ENCODE measurements at regions of chr10 and their contacts with region 1.

Region 1: DNA sequence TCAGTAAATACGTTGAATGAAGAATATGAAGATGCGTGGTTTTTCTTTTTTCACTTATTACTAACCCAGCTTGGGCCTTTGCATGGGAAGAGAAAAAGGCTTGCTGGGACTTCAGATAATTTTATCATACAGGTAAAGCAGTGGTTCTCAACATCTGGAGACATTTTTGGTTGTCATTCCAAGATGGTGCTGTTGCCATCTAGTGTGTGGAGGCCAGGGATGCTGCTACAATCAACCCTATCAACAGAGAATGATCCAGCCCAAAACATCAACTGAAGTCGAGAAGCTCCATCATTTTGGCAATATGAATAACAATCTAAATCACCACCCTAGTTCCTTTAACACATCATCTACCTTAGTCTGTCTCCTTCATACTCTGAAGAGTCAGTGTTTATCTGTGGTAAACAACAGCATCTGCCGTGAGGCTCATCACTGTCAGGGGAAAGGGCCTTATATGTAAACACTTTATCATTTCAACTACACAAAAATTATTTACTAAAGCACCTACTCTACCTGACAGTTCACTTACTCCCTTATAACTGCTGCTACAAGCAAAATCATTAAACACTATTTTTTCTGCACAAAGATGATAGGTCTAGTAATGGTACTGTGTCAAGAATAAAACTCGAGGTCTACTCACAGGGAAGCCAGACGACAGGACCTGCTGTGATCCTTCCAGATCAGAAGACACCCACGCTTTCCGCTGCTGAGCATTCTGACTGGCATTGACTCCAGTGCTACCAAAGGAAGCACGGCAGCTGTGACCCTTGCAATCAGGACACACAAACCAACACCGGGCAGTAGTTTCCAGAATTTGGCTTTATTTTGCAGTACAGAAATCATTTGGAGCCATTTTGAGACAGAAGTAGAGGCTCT is 48.6 kb downstream of the GDI2 start:
- DNase-seq: no peak
- H3K4me3 Mint-ChIP-seq: no peak overlapping the region
- H3K27ac Mint-ChIP-seq: peak overlapping the region; percentile 84
- H3K4me1 Mint-ChIP-seq: peaks cover 11% of the 10 kb centered on the region
- H3K27me3 Mint-ChIP-seq: no peaks in the 10 kb centered on the region

Region 2: GRCh38 chr10:5476918-5477525 is 287.6 kb before region 1 on chr10:
- intact Hi-C with region 1: no loop called
- DNase-seq: no peak
- H3K4me3 Mint-ChIP-seq: no peak overlapping the region
- H3K27ac Mint-ChIP-seq: no peak overlapping the region
- H3K4me1 Mint-ChIP-seq: peaks cover 2% of the 10 kb centered on the region
- H3K27me3 Mint-ChIP-seq: no peaks in the 10 kb centered on the region

Region 3: GRCh38 chr10:5723692-5724091 is 41.0 kb before region 1 on chr10:
- intact Hi-C with region 1: loop called (anchors 5 kb)
- DNase-seq: no peak
- H3K4me3 Mint-ChIP-seq: no peak overlapping the region
- H3K27ac Mint-ChIP-seq: no peak overlapping the region
- H3K4me1 Mint-ChIP-seq: peaks cover 9% of the 10 kb centered on the region
- H3K27me3 Mint-ChIP-seq: no peaks in the 10 kb centered on the region

Region 4: GRCh38 chr10:5788969-5789368 is 24.3 kb after region 1 on chr10:
- intact Hi-C with region 1: no loop called
- DNase-seq: peak; percentile 71
- H3K4me3 Mint-ChIP-seq: peak overlapping the region; percentile 32
- H3K27ac Mint-ChIP-seq: no peak overlapping the region
- H3K4me1 Mint-ChIP-seq: peaks cover 27% of the 10 kb centered on the region
- H3K27me3 Mint-ChIP-seq: no peaks in the 10 kb centered on the region

Measured in activated CD4-positive, alpha-beta T cell treated with anti-CD3 and anti-CD28 coated beads, Interleukin-2, amount 10 ng/mL, durations not matched to agents 24 days and 14 days (primary cell).